ENCODE measurements at regions of chr12 and their contacts with region 1.

Region 1: GRCh38 chr12:75390899-75391538 is at the start of gene GLIPR1L2:
- DNase-seq: peak; percentile 95 to 96 (median 96)
- ATAC-seq: peak; percentile 100
- H3K4me3 ChIP-seq: peak within 1 kb of the TSS; percentile 17
- H3K4me1 ChIP-seq: peaks cover 4% of the 10 kb centered on the region
- CTCF ChIP-seq: peak; percentile 71
- total RNA-seq, gene GLIPR1L2: 0.52 to 0.98 TPM in 2 of 3 donors, not detected in the other

Region 2: GRCh38 chr12:75505706-75506312 is 114.8 kb after region 1 on chr12:
- intact Hi-C with region 1: loop called in 1 of 2 experiments (anchors 10 kb)
- DNase-seq: no peak
- ATAC-seq: no peak
- H3K4me3 ChIP-seq: no peak overlapping the region
- H3K4me1 ChIP-seq: peaks cover 10% of the 10 kb centered on the region
- CTCF ChIP-seq: no peak

Region 3: DNA sequence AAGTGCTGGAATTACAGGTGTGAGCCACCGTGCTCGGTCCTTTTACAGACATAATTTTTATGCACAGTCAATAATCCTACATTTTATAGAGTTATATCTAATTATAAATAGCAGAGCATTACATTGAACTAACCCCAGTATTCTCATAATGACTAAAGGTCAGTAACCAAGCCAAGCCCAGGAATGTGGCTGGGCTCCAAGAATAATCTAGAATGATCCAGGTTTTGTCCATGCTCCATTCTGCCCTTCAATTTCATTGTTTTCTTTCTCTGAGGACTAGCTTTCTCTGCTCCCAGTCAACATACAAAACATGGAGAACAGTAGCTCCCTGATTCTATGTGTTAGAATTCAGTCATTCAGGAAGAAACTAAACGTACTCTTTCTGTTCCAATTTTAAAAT is 212.5 kb after region 1 on chr12:
- intact Hi-C with region 1: no loop called
- DNase-seq: no peak
- ATAC-seq: no peak
- H3K4me3 ChIP-seq: no peak overlapping the region
- H3K4me1 ChIP-seq: no peaks in the 10 kb centered on the region
- CTCF ChIP-seq: no peak